Activated B cell treated with CpG ODN at 0.5 μM for 24 hours (primary cell): ENCODE measurements at regions of chr20 and their contacts with region 1.

Region 1: GRCh38 chr20:21361266-21361665 is 36.1 kb downstream of the NKX2-4 start:
- DNase-seq: no peak
- ATAC-seq: no peak
- H3K4me3 Mint-ChIP-seq: no peak overlapping the region
- H3K27ac Mint-ChIP-seq: no peak overlapping the region
- H3K4me1 Mint-ChIP-seq: no peaks in the 10 kb centered on the region
- H3K27me3 Mint-ChIP-seq: no peaks in the 10 kb centered on the region
- CTCF ChIP-seq: no peak

Region 2: DNA sequence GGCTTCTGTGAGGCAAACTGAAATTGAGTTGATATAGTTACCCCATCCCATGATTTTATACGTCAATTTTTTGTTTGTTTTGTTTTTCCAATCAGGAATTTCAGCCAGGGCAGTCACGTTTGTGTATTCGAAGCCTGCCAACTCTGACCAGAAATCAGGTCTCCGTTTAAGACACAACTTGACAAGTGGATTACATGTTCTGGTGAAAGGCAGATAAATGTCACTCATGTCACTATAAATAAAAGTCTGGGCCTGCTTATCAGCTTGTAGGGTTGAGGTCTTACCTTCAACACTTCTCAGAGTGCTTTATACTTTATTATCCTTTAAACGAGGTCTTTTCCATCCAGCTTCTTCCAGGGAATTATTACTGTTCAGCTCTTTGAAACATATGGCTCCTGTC is 66.5 kb before region 1 on chr20:
- CTCF ChIA-PET with region 1: no interaction called
- POLR2A ChIA-PET with region 1: no interaction called
- intact Hi-C with region 1: no loop called
- DNase-seq: no peak
- ATAC-seq: no peak
- H3K4me3 Mint-ChIP-seq: no peak overlapping the region
- H3K27ac Mint-ChIP-seq: no peak overlapping the region
- H3K4me1 Mint-ChIP-seq: no peaks in the 10 kb centered on the region
- H3K27me3 Mint-ChIP-seq: peaks cover 19% of the 10 kb centered on the region
- CTCF ChIP-seq: no peak

Region 3: DNA sequence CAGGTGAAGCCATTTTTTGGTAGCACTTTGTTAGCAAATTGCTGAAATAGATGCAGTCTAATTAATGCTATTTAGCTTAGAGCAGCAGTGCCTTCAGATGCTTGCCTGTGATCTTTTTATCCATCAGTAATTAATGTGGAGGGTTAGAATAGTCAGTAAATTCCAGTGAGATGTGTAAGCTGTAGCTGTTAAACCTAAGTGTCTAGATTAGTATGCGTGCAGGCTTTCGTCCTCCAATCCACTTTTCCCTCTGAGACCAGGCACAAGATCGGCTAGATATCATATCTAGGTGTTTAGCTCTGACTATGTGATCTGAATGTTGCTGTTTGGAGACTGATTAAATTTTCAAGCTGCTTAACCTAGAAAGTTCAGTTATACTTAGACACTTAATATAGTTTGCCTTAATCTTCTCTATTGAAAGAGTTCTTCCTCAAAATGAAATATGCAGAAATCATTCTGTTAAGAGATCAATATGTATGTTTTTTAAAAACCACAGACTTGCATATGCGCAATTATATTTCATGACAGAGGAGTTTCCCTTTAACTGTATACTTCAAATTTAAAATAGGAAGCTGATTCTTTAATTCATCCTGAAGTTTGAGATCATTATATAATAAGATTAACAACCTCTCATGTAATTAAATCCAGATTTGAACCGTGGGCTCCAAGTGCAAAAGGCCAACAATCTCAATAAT is 16.9 kb before region 1 on chr20:
- CTCF ChIA-PET with region 1: no interaction called
- POLR2A ChIA-PET with region 1: no interaction called
- intact Hi-C with region 1: loop called (anchors 2 kb)
- DNase-seq: no peak
- ATAC-seq: no peak
- H3K4me3 Mint-ChIP-seq: no peak overlapping the region
- H3K27ac Mint-ChIP-seq: no peak overlapping the region
- H3K4me1 Mint-ChIP-seq: no peaks in the 10 kb centered on the region
- H3K27me3 Mint-ChIP-seq: no peaks in the 10 kb centered on the region
- CTCF ChIP-seq: no peak

Region 4: GRCh38 chr20:21373436-21373835 is 12.2 kb after region 1 on chr20:
- CTCF ChIA-PET with region 1: no interaction called
- POLR2A ChIA-PET with region 1: no interaction called
- intact Hi-C with region 1: no loop called
- DNase-seq: no peak
- ATAC-seq: no peak
- H3K4me3 Mint-ChIP-seq: no peak overlapping the region
- H3K27ac Mint-ChIP-seq: no peak overlapping the region
- H3K4me1 Mint-ChIP-seq: peaks cover 2% of the 10 kb centered on the region
- H3K27me3 Mint-ChIP-seq: no peaks in the 10 kb centered on the region
- CTCF ChIP-seq: no peak